Heart right ventricle (tissue), 16 donors: ENCODE measurements at regions of chr1 and their contacts with region 1.

Region 1: DNA sequence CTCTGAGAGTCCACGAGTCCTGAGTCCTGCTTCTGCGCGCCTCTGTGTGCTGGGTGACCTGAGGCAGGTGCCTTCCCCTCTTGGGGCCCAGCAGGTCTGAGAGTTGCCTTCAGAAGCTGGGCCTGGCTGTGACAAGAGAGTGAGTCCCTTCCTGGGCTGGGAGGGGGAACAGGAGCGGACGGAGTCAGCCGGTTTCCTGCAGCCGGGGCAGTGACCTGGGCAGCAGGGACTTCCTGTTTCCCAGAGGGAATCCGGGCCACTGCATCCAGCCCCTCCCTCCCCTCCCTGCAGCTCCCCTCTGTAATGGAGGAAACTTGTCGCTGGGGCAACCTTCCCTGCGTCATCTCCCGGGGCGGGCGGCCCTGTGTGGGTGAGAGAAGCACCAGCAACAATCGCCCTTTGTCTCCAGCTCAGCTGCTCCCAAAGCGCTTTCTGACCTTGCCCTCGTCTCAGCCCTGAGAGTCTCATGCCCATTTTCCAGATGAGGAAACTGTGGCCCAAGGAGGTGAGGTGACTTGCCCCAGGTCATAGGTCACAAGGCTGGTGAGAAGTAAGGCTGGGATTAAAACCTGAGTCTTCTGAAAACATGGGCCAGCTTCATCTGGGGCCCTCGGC is 61.1 kb downstream of the SDC3 start:
- DNase-seq: peak; percentile 83 to 94
- ATAC-seq: peak; percentile 85 to 96 (median 94)
- H3K4me3 ChIP-seq: no peak overlapping the region
- H3K27ac ChIP-seq: peak overlapping the region; percentile 55 to 90 (median 83)
- H3K4me1 ChIP-seq: peaks cover 10 to 48% (median 24%) of the 10 kb centered on the region in 9 donors
- H3K27me3 ChIP-seq: peaks cover 0 to 60% (median 0%) of the 10 kb centered on the region in 7 donors
- CTCF ChIP-seq: no peak

Region 2: GRCh38 chr1:30525971-30526651 is 321.4 kb before region 1 on chr1:
- intact Hi-C with region 1: no loop called
- DNase-seq: peak; percentile 28 to 35
- ATAC-seq: peak in 5 of 8 donors; percentile 5 to 48 (median 26)
- H3K4me3 ChIP-seq: no peak overlapping the region
- H3K27ac ChIP-seq: peak overlapping the region in 9 of 10 donors; percentile 78 to 94 (median 87)
- H3K4me1 ChIP-seq: peaks cover 6 to 63% (median 31%) of the 10 kb centered on the region in 9 donors
- H3K27me3 ChIP-seq: peaks cover 0 to 9% (median 0%) of the 10 kb centered on the region in 7 donors
- CTCF ChIP-seq: no peak

Region 3: DNA sequence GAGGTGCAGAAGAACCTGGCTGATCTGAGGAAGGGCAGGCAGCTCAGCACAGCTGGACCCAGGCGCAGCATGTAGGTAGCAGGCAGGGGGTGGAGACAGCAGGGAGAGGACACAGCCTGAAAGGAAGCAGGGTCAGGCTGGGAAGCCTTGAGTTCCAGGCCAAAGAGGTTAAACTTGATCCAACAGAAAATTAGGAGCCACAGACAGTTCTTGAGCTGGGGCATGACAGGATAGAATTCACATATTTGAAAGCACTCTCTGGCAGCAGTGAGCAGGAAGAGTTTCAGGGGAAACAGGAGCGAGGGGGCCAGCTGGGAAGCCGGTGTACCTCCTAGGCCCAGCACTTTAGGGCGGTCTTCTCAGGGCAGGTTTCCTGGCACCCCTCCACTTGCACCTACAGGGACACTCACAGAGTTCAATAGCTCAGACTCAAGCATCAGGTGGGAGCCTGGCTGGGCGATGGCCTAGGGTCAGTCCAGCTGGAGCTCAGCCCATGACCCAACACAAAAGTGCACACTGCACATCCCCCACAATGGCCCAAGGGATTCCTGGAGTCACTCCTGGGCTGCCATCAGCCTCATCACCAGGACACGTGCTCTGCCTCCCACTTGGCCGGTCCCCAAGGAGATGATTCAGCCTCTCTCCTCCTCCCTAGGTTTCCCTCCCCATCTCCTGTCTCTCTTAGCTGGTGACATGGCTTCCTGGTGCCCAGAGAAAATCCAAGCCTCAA is 146.8 kb before region 1 on chr1:
- intact Hi-C with region 1: no loop called
- DNase-seq: no peak
- ATAC-seq: peak in 6 of 8 donors; percentile 17 to 78 (median 35)
- H3K4me3 ChIP-seq: no peak overlapping the region
- H3K27ac ChIP-seq: no peak overlapping the region
- H3K4me1 ChIP-seq: peaks cover 0 to 21% (median 0%) of the 10 kb centered on the region in 9 donors
- H3K27me3 ChIP-seq: peaks cover 0 to 9% (median 2%) of the 10 kb centered on the region in 7 donors
- CTCF ChIP-seq: no peak

Region 4: DNA sequence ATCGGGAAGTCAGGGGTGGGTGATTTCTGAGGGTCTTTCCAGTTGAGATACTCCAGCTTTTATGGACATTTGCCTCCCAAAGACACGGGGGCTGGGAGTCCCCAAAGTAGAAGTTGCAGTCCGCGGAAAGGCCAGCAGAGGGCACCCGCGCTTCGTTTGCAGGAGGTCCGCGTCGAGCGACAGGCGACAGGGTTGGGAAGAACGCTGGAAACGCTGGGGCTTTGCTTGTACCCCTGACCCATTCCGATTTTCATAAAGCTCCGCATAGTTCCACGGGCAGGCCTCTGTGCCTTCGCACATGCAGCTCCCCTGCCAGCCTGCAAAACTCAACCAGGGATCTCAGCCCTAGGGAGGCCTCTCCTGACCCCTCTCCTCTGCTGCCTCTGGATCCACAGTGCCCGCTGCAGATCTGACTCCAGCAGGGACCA is 45.7 kb before region 1 on chr1:
- intact Hi-C with region 1: loop called in 2 of 10 experiments (anchors 5 kb)
- DNase-seq: peak; percentile 81 to 88
- ATAC-seq: peak; percentile 40 to 87 (median 70)
- H3K4me3 ChIP-seq: peak overlapping the region in 1 of 10 donors; percentile 25
- H3K27ac ChIP-seq: no peak overlapping the region
- H3K4me1 ChIP-seq: peaks cover 11 to 42% (median 26%) of the 10 kb centered on the region in 9 donors
- H3K27me3 ChIP-seq: peaks cover 0 to 39% (median 0%) of the 10 kb centered on the region in 7 donors
- CTCF ChIP-seq: peak; percentile 95 to 98 (median 97)

Region 5: GRCh38 chr1:30809514-30810263 is 37.8 kb before region 1 on chr1:
- intact Hi-C with region 1: loop called in 2 of 10 experiments (anchors 5 kb)
- DNase-seq: no peak
- ATAC-seq: peak; percentile 12 to 82 (median 51)
- H3K4me3 ChIP-seq: no peak overlapping the region
- H3K27ac ChIP-seq: peak overlapping the region in 5 of 10 donors; percentile 1 to 62 (median 25)
- H3K4me1 ChIP-seq: peaks cover 7 to 42% (median 37%) of the 10 kb centered on the region in 9 donors
- H3K27me3 ChIP-seq: peaks cover 0 to 60% (median 0%) of the 10 kb centered on the region in 7 donors
- CTCF ChIP-seq: no peak

Region 6: GRCh38 chr1:30816211-30817076 is 31.0 kb before region 1 on chr1:
- intact Hi-C with region 1: loop called in 1 of 10 experiments (anchors 5 kb)
- DNase-seq: peak; percentile 55 to 81
- ATAC-seq: peak; percentile 58 to 92 (median 80)
- H3K4me3 ChIP-seq: no peak overlapping the region
- H3K27ac ChIP-seq: peak overlapping the region in 3 of 10 donors; percentile 37 to 40 (median 38)
- H3K4me1 ChIP-seq: peaks cover 0 to 31% (median 17%) of the 10 kb centered on the region in 9 donors
- H3K27me3 ChIP-seq: peaks cover 0 to 75% (median 0%) of the 10 kb centered on the region in 7 donors
- CTCF ChIP-seq: no peak

Region 7: DNA sequence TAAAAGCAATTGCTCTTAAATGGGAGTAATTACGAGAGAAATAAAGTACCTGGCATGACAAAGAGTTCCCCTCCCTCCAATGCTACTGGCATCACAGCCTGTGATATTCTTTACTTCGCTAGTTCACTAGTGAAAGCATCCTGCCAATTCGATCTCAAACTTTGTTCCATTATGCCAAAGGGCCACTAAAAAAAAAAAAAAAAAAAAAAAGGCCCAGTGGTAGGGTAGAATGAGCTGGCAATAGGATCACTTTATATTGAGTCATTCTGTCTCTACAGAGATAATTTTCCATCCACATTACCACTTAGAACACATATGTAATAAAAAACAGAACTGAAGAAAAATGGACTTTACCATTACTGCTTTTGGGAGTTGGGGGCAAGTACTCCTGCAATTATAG is 206.9 kb after region 1 on chr1:
- intact Hi-C with region 1: no loop called
- DNase-seq: no peak
- ATAC-seq: no peak
- H3K4me3 ChIP-seq: no peak overlapping the region
- H3K27ac ChIP-seq: no peak overlapping the region
- H3K4me1 ChIP-seq: peaks cover 7 to 96% (median 61%) of the 10 kb centered on the region in 9 donors
- H3K27me3 ChIP-seq: no peaks in the 10 kb centered on the region
- CTCF ChIP-seq: no peak